Activated CD4-positive, alpha-beta T cell treated with anti-CD3 and anti-CD28 coated beads for 36 hours (primary cell): ENCODE measurements at regions of chr15 and their contacts with region 1.

Region 1: DNA sequence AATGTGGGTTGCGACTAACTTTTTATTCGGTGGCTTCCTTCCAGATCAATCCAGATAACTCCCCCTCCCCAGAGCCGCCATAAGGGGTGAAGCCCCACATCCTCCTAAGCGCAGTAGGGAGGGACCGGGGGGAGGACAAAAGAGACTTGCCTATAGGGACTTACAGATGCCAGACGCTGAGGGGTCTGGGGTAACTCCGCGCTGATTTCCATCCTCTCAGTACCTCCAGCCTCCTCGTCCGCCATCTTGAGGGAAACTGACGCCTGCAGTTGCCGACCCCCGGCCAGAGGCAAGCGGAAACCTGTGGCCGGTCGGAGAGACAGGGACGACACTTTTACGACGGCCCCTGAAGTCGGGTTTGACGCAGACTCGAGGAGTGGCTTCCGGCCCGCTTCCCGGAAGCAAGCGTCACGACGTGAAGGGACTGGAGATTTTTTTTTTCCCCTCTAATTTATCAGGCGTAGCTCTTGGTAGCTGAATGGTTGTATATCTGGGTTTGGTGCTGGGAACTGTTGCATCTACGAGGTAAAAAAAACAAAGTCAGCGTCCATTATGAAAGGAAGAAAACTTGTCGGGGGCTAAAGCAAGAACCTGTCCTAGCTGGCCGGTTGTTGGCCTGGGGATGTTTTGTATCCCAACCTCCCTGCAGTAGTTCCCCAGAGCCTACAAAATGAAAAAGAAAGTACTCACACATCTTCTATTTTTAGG is at the start of gene UBR1:
- DNase-seq: peak; percentile 95
- ATAC-seq: peak; percentile 94
- H3K4me3 Mint-ChIP-seq: peak within 1 kb of the TSS; percentile 93
- H3K27ac Mint-ChIP-seq: peak within 1 kb of the TSS; percentile 96
- H3K4me1 Mint-ChIP-seq: peaks cover 41% of the 10 kb centered on the region
- H3K27me3 Mint-ChIP-seq: no peaks in the 10 kb centered on the region
- total RNA-seq, gene UBR1: 26.8 to 30.6 TPM

Region 2: GRCh38 chr15:42495361-42496212 is 610.3 kb before region 1 on chr15 and contains the start of gene SNAP23:
- CTCF ChIA-PET with region 1: no interaction called
- POLR2A ChIA-PET with region 1: no interaction called
- intact Hi-C with region 1: loop called in 1 of 2 experiments (anchors 2 kb)
- DNase-seq: peak; percentile 89
- ATAC-seq: peak; percentile 95
- H3K4me3 Mint-ChIP-seq: peak within 1 kb of the TSS; percentile 96
- H3K27ac Mint-ChIP-seq: peak within 1 kb of the TSS; percentile 97
- H3K4me1 Mint-ChIP-seq: peaks cover 68% of the 10 kb centered on the region
- H3K27me3 Mint-ChIP-seq: no peaks in the 10 kb centered on the region
- total RNA-seq, gene SNAP23: 45.5 to 77.5 TPM

Region 3: DNA sequence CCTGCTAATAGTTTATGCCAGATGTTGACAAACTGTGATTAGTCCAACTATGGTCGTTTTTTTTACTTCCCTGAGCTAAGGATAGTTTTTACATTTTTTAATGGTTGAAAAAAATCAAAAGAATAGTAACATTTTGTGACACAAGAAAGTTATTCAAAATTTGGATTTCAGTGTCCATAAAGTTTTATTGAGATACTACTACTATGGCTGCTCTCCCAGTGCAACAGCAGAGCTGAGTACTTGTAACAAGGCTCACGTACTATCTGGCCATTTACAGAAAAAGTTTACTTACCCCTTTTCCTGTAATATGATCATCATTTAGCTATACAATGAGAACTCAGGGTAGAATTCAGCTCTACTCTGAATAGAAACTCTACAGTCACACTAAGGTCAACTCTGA is 15.9 kb after region 1 on chr15:
- CTCF ChIA-PET with region 1: interaction called, 6 read pairs
- POLR2A ChIA-PET with region 1: interaction called, 3 read pairs
- intact Hi-C with region 1: loop called (anchors 1 to 2 kb)
- DNase-seq: no peak
- ATAC-seq: no peak
- H3K4me3 Mint-ChIP-seq: no peak overlapping the region
- H3K27ac Mint-ChIP-seq: no peak overlapping the region
- H3K4me1 Mint-ChIP-seq: peaks cover 14% of the 10 kb centered on the region
- H3K27me3 Mint-ChIP-seq: peaks cover 1% of the 10 kb centered on the region

Region 4: DNA sequence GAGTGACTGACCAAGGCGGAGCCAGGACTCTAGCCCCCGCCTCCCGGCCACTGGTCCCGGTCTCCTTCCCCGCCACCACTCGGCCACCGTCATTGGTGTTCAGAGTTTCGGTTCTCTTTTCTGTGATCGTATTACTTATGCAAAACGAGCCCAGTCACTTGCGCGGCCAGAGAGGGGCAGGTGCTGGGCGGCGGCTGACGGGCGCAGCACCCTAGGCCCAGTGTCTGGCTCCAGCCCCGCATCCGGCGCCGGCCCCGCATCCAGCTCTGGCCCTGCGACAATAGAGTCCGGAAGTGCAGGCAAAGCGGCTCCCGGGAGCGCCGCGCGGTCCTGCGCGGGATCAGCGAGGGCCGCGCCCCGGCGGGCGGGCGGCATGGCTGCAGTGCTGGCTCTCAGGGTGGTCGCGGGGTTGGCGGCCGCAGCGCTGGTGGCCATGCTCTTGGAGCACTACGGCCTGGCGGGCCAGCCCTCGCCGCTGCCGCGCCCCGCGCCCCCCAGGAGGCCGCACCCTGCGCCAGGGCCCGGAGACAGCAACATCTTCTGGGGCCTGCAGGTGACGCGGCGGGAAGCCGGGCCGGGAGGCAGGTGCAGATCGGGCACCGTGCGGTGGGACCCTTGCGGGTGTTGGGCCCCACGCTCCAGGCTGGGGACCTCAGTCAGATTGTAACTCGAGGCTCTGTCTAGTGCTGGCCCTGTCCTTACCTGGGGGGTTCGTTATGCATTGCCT is 27.7 kb after region 1 on chr15 and contains the start of gene TMEM62:
- CTCF ChIA-PET with region 1: interaction called, 3 read pairs
- POLR2A ChIA-PET with region 1: no interaction called
- intact Hi-C with region 1: loop called in 1 of 2 experiments (anchors 1 kb)
- DNase-seq: peak; percentile 82
- ATAC-seq: peak; percentile 80
- H3K4me3 Mint-ChIP-seq: peak within 1 kb of the TSS; percentile 79
- H3K27ac Mint-ChIP-seq: peak within 1 kb of the TSS; percentile 84
- H3K4me1 Mint-ChIP-seq: peaks cover 18% of the 10 kb centered on the region
- H3K27me3 Mint-ChIP-seq: no peaks in the 10 kb centered on the region
- total RNA-seq, gene TMEM62: 10.9 to 12.9 TPM

Region 5: GRCh38 chr15:43370975-43371974 is 265.3 kb after region 1 on chr15 and contains the starts of genes TUBGCP4 and ZSCAN29:
- CTCF ChIA-PET with region 1: no interaction called
- POLR2A ChIA-PET with region 1: no interaction called
- intact Hi-C with region 1: loop called in 1 of 2 experiments (anchors 1 kb)
- DNase-seq: peak; percentile 87
- ATAC-seq: peak; percentile 86
- H3K4me3 Mint-ChIP-seq: peak within 1 kb of the TSS; percentile 86
- H3K27ac Mint-ChIP-seq: peak within 1 kb of the TSS; percentile 85
- H3K4me1 Mint-ChIP-seq: peaks cover 46% of the 10 kb centered on the region
- H3K27me3 Mint-ChIP-seq: no peaks in the 10 kb centered on the region
- total RNA-seq, gene TUBGCP4: 43.6 to 44.0 TPM
- total RNA-seq, gene ZSCAN29: 20.8 to 26.4 TPM

Region 6: GRCh38 chr15:44489464-44489863 is 1383.5 kb after region 1 on chr15:
- CTCF ChIA-PET with region 1: no interaction called
- POLR2A ChIA-PET with region 1: no interaction called
- intact Hi-C with region 1: no loop called
- DNase-seq: no peak
- ATAC-seq: peak; percentile 94
- H3K4me3 Mint-ChIP-seq: no peak overlapping the region
- H3K27ac Mint-ChIP-seq: peak overlapping the region; percentile 71
- H3K4me1 Mint-ChIP-seq: peaks cover 43% of the 10 kb centered on the region
- H3K27me3 Mint-ChIP-seq: no peaks in the 10 kb centered on the region